ENCODE measurements at regions of chr13 and their contacts with region 1.

Region 1: GRCh38 chr13:110412132-110412914 is 105.2 kb downstream of the COL4A2 start:
- DNase-seq: peak; percentile 93
- H3K4me3 ChIP-seq: no peak overlapping the region
- H3K27ac ChIP-seq: peak overlapping the region; percentile 97
- H3K4me1 ChIP-seq: peaks cover 53% of the 10 kb centered on the region
- H3K27me3 ChIP-seq: no peaks in the 10 kb centered on the region
- CTCF ChIP-seq: peak; percentile 88
- POLR2A ChIP-seq: no peak

Region 2: DNA sequence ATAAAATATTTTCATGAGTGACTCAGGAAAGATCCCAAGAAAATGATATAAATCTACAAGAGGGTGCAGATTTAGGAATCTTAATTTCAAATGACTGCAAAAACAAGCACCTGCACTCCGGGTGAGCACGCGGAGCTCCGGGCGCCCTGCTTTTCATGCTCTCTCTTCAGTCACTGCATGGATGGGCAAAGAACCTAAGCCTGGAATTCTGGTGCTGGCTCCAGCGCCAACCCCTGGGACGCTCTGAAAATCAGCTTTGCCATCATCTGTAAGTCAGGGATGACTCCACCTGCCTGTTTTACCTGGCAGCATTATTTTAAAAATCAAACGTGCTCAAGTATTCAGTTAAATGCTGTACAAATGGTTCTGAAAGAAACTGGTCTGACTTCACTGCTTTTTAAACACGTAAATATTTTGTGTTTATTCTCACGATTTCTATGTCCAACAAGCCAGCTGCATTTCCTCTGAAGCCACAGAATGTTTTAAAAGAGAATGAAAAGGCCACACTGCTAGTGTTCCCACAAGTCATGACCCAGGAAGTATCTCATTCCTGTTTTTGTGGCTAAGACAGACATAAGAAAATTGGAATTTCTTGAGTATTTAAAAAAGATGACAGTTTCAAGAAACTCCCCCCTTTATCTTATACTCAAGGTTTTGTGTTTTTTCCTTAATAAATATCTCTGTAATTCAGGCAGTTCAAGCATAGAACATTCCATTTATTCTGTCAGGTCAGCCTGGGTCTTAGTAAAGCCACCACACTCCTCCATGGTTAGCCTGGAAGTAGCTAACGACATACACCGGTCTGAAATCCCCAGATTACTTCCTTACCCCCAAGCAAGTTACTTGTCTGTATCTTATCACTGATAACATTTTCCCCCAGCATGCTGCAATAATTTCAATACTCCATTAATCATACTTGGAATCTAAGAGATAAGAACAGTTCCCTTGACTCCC is 186.4 kb before region 1 on chr13:
- CTCF ChIA-PET with region 1: interaction called, 28 read pairs
- POLR2A ChIA-PET with region 1: no interaction called
- dilution Hi-C with region 1: no loop called
- intact Hi-C with region 1: loop called (anchors 1 kb)
- DNase-seq: peak; percentile 65
- H3K4me3 ChIP-seq: no peak overlapping the region
- H3K27ac ChIP-seq: peak overlapping the region; percentile 56
- H3K4me1 ChIP-seq: peaks cover 21% of the 10 kb centered on the region
- H3K27me3 ChIP-seq: no peaks in the 10 kb centered on the region
- CTCF ChIP-seq: no peak
- POLR2A ChIP-seq: no peak

Region 3: DNA sequence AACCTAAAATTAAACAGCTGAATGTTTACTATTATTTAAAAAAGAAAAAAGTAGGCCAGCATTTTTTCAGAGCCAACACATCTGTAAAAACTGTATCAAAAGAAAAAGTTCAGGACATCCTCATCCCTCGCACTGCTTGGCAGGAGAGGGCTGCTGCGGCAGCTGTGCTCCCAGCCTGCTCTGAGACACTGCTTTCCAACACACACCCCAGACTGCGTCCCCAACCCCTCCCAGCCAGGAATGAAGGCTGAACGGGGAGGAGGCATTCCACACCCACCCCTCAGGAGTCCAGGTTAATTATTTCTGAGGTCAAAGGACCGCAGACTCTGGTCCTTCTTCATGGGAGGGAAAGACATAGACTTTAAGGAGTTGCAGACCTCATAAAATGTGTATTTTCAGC is 148.4 kb before region 1 on chr13:
- CTCF ChIA-PET with region 1: interaction called, 6 read pairs
- POLR2A ChIA-PET with region 1: no interaction called
- dilution Hi-C with region 1: no loop called
- intact Hi-C with region 1: loop called (anchors 1 kb)
- DNase-seq: no peak
- H3K4me3 ChIP-seq: no peak overlapping the region
- H3K27ac ChIP-seq: peak overlapping the region; percentile 25
- H3K4me1 ChIP-seq: peaks cover 85% of the 10 kb centered on the region
- H3K27me3 ChIP-seq: no peaks in the 10 kb centered on the region
- CTCF ChIP-seq: no peak
- POLR2A ChIP-seq: no peak

Region 4: DNA sequence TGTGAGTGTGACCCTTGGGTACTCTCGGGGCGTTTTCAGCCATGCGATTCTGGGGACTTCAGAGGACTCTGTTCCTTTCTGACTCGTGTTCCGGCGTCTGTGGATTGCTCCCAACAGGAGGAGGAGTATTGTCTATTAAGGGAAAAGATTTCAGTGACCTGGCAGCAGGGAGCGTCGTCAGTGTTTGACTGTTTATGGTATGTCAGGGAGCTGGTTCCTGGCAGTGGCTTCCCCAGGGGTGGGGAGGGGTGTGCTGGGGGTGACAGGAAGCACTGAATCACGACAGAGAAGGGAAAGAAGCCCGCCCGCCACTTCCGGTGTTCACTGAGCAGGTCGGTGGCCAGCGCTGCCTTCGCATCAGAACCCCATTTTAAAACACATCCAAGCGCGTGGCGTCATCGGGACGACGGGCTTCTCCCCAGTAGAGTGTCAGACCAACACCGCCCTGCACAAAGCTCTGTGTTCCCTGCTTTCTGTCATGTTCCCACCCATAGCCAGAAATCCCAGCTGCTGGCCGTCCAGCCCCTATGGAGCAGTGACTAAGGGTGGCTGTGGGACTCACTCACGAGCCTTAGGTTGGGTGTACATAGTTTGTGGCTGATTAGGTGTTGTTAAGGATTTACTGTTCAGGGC is 71.4 kb before region 1 on chr13:
- CTCF ChIA-PET with region 1: interaction called, 10 read pairs
- POLR2A ChIA-PET with region 1: no interaction called
- dilution Hi-C with region 1: no loop called
- intact Hi-C with region 1: loop called (anchors 1 kb)
- DNase-seq: peak; percentile 80
- H3K4me3 ChIP-seq: peak overlapping the region in 1 of 3 experiments; percentile 31
- H3K27ac ChIP-seq: peak overlapping the region; percentile 100
- H3K4me1 ChIP-seq: peaks cover 62% of the 10 kb centered on the region
- H3K27me3 ChIP-seq: no peaks in the 10 kb centered on the region
- CTCF ChIP-seq: no peak
- POLR2A ChIP-seq: peak; percentile 18

Region 5: DNA sequence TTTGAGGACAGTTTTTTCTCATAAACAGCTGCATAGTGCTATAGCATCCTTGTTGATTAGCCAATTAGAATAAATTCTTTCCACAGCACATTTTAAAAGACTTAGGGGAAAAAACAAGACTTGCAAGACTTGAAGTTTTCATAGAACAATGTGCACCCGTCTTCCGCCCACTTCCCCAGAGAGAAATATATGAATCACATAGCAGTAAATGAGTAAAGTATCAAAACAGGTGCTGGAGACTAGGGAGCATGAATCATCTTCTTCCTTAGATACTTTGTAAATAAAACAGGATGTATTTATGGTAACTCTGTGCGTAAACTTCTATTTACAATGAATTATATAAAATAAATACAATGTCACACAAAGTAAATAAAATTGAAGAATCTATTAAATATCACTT is 30.1 kb before region 1 on chr13:
- CTCF ChIA-PET with region 1: interaction called, 3 read pairs
- POLR2A ChIA-PET with region 1: no interaction called
- dilution Hi-C with region 1: no loop called
- intact Hi-C with region 1: loop called (anchors 1 kb)
- DNase-seq: peak; percentile 90
- H3K4me3 ChIP-seq: no peak overlapping the region
- H3K27ac ChIP-seq: peak overlapping the region; percentile 89
- H3K4me1 ChIP-seq: peaks cover 37% of the 10 kb centered on the region
- H3K27me3 ChIP-seq: no peaks in the 10 kb centered on the region
- CTCF ChIP-seq: no peak
- POLR2A ChIP-seq: no peak